Ascending aorta (tissue), 2 donors: ENCODE measurements at regions of chr20 and their contacts with region 1.

Region 1: DNA sequence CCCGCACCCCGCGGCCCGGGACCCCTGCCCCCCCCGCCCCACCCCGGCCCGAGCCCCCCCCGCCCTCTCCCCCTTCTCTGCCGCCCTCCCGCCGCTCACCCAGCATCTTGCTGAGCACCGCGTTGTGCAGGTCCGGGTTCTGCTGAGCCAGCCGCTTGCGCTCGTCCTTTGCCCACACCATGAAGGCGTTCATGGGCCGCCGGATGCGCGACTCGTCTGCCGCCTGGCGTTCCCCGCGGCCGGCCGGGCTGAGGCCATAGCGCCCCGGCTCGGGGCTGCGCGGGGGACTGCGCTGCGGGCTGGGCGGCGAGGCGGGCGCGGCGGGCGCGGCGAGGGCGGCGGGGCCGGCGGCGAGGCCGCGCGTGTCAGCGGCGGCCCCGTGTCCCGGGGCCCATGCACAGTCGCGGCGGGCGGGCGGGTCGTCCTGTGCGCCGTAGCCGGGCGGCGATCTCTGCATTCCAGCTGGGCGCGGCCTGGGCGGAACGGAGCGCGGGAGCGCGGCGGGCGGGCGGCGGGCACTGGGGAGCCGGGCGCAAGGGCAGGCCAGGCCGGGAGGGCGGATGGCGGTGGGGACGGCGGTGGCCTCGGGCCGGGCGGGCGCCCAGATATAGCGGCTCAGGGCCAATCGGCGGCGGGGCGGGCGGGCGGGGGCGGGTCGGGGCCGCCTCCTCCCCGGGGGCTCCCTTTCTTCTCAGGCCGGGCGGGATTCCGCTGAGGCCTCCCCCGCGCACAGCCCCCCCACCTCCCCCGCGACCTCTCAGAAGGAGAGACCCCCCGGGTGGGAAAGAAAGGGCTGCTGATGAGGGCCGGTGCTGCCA is at the start of gene SOX18:
- DNase-seq: no peak
- H3K4me3 ChIP-seq: peak within 1 kb of the TSS; percentile 42 to 48
- H3K27ac ChIP-seq: peak within 1 kb of the TSS; percentile 31 to 48
- H3K4me1 ChIP-seq: peaks cover 0 to 3% of the 10 kb centered on the region in 2 donors
- H3K27me3 ChIP-seq: peaks cover 13% of the 10 kb centered on the region
- CTCF ChIP-seq: no peak
- total RNA-seq, gene SOX18: 244 TPM

Region 2: DNA sequence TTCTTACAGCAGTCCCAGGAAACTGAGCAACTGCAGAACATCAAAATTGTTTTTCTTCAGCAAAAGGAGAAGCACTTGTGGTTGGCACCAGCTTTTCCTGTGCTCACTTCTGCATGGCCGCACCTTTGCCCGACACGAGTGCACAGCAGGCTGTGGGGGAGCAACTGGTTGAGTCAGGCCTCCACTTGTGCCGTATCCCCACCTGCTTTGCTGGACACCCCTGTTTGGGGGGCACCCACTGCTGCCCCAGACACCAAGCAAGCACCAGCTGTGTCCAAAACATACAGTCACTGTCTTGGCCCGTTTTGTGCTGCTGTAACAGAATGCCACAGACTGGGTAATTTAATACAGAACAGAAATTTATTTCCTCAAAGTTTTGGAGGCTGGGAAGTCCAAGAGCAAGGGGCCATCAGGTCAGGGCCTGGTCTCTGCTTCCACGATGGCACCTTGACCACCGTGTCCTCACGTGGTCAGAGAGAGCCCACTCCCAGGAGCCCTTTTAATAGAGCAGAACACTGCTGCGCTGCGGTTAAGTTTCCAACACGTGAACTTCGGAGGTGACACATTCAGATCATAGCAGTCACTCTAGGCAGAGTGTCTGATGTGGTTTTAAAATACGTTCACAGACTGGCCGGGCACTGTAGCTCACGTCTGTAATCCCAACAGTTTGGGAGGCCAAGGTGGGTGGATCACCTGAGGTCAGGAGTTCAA is 413.7 kb before region 1 on chr20:
- intact Hi-C with region 1: loop called (anchors 5 kb)
- DNase-seq: no peak
- H3K4me3 ChIP-seq: no peak overlapping the region
- H3K27ac ChIP-seq: no peak overlapping the region
- H3K4me1 ChIP-seq: no peaks in the 10 kb centered on the region
- H3K27me3 ChIP-seq: no peaks in the 10 kb centered on the region
- CTCF ChIP-seq: no peak